Ascending aorta (tissue), 2 donors: ENCODE measurements at regions of chr1 and their contacts with region 1.

Region 1: GRCh38 chr1:206808615-206809014 is 36.3 kb upstream of the IL10 start:
- DNase-seq: no peak
- H3K4me3 ChIP-seq: no peak overlapping the region
- H3K27ac ChIP-seq: no peak overlapping the region
- H3K4me1 ChIP-seq: no peaks in the 10 kb centered on the region
- H3K27me3 ChIP-seq: no peaks in the 10 kb centered on the region
- CTCF ChIP-seq: peak; percentile 13 to 46 (median 43)

Region 2: GRCh38 chr1:206658264-206658980 is 150.2 kb before region 1 on chr1:
- intact Hi-C with region 1: loop called (anchors 5 kb)
- DNase-seq: peak in 1 of 2 donors; percentile 70
- H3K4me3 ChIP-seq: no peak overlapping the region
- H3K27ac ChIP-seq: no peak overlapping the region
- H3K4me1 ChIP-seq: no peaks in the 10 kb centered on the region
- H3K27me3 ChIP-seq: no peaks in the 10 kb centered on the region
- CTCF ChIP-seq: peak; percentile 34 to 69 (median 65)

Region 3: GRCh38 chr1:206882519-206882918 is 73.9 kb after region 1 on chr1:
- intact Hi-C with region 1: no loop called
- DNase-seq: no peak
- H3K4me3 ChIP-seq: no peak overlapping the region
- H3K27ac ChIP-seq: no peak overlapping the region
- H3K4me1 ChIP-seq: no peaks in the 10 kb centered on the region
- H3K27me3 ChIP-seq: no peaks in the 10 kb centered on the region
- CTCF ChIP-seq: no peak